ENCODE measurements at regions of chr6 and their contacts with region 1.

Region 1: DNA sequence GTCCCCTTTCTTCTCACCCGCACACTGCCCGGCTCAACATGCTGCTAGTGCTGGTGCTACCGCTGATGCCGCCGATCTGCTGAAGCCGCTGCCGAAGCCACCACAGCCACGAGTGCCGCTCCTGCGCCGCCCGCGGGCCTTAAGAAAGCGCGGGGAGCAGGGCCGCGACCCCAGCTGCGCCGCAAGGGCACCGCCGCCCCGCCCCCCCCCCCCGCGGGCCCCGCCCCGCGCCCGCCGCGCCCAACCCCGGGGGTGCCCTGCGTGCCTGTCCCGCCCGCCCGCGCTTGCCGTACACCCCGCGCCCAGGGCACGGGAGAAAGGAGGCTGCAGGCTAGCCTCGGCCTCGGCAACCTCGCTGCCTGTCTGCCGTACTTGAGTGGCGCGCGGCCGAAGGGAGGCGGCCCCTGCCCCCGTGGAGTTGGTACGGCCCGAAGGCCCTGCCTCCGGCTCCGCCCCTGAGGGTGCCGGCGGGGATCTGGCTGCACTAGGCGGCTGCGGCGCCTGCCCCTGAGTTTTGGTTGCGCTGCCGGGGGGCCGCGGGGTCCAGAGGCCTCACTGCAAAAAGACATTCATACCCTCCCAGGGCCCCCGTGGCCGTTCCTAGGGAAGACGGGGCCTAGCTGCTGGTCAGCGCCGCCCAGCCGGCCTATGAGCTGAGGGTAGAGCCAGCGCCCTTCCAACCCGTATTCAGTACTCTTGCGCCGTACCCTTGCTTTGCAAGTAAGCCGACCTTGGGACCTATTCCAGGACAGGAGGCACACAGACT is at the start of gene SOD2:
- DNase-seq: peak; percentile 75
- H3K4me3 Mint-ChIP-seq: peak within 1 kb of the TSS; percentile 94
- H3K27ac Mint-ChIP-seq: peak within 1 kb of the TSS; percentile 99
- H3K4me1 Mint-ChIP-seq: peaks cover 51% of the 10 kb centered on the region
- H3K27me3 Mint-ChIP-seq: no peaks in the 10 kb centered on the region
- total RNA-seq, gene SOD2: 78.3 and 81.0 TPM in 2 replicates

Region 2: GRCh38 chr6:158660333-158660754 is 1033.0 kb before region 1 on chr6:
- intact Hi-C with region 1: no loop called
- DNase-seq: no peak
- H3K4me3 Mint-ChIP-seq: no peak overlapping the region
- H3K27ac Mint-ChIP-seq: no peak overlapping the region
- H3K4me1 Mint-ChIP-seq: peaks cover 46% of the 10 kb centered on the region
- H3K27me3 Mint-ChIP-seq: no peaks in the 10 kb centered on the region

Region 3: GRCh38 chr6:159017757-159018559 is 675.4 kb before region 1 on chr6:
- intact Hi-C with region 1: loop called (anchors 5 kb)
- DNase-seq: no peak
- H3K4me3 Mint-ChIP-seq: peak overlapping the region; percentile 38
- H3K27ac Mint-ChIP-seq: peak overlapping the region; percentile 92
- H3K4me1 Mint-ChIP-seq: peaks cover 29% of the 10 kb centered on the region
- H3K27me3 Mint-ChIP-seq: no peaks in the 10 kb centered on the region

Region 4: GRCh38 chr6:159761873-159762680 is 68.8 kb after region 1 on chr6 and contains the start of gene ACAT2:
- intact Hi-C with region 1: loop called (anchors 1 kb)
- DNase-seq: peak; percentile 94
- H3K4me3 Mint-ChIP-seq: peak within 1 kb of the TSS; percentile 97
- H3K27ac Mint-ChIP-seq: peak within 1 kb of the TSS; percentile 93
- H3K4me1 Mint-ChIP-seq: peaks cover 45% of the 10 kb centered on the region
- H3K27me3 Mint-ChIP-seq: no peaks in the 10 kb centered on the region
- total RNA-seq, gene ACAT2: 83.1 and 84.2 TPM in 2 replicates

Region 5: DNA sequence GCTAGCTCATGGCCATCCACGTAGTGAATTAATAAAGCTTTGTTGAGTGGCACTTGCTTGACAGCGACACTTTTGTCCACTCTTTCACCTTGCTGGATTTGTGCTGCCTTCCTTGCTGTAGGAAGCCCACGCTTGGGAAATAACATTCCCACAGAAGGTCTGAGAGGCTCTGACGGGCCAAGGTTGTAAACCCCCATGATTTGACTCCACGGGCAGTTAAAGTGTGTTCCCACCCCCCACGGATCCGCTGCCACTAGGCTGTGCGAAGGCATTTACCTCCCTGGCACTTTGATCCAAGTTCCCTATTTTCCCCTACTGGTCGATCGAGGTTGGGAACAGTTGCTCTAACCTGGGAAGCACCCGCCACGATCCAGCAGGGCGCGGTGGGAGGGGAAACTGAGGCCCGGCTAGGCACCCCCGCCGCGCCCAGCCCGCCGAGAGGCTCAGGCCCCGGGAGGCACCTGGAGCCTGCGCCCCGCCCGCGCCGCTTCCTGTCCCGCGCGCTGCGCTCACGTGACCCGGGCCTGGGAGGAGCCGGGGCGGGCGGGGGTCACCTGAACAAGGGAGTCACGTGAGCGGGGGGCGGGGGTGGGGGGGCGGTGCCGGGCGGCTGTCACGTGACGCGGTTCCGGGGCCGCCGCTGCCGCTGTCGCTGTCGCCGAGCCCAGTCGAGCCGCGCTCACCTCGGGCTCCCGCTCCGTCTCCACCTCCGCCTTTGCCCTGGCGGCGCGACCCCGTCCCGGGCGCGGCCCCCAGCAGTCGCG is 275.3 kb after region 1 on chr6 and contains the start of gene IGF2R:
- intact Hi-C with region 1: loop called (anchors 2 kb)
- DNase-seq: peak; percentile 90
- H3K4me3 Mint-ChIP-seq: peak within 1 kb of the TSS; percentile 96
- H3K27ac Mint-ChIP-seq: peak within 1 kb of the TSS; percentile 93
- H3K4me1 Mint-ChIP-seq: peaks cover 34% of the 10 kb centered on the region
- H3K27me3 Mint-ChIP-seq: peaks cover 17% of the 10 kb centered on the region
- total RNA-seq, gene IGF2R: 118 and 126 TPM in 2 replicates

Region 6: GRCh38 chr6:160462551-160463109 is 769.3 kb after region 1 on chr6:
- intact Hi-C with region 1: loop called (anchors 5 kb)
- DNase-seq: peak; percentile 76
- H3K4me3 Mint-ChIP-seq: peak overlapping the region; percentile 34
- H3K27ac Mint-ChIP-seq: peak overlapping the region; percentile 71
- H3K4me1 Mint-ChIP-seq: peaks cover 79% of the 10 kb centered on the region
- H3K27me3 Mint-ChIP-seq: peaks cover 14% of the 10 kb centered on the region

Region 7: GRCh38 chr6:160714731-160715316 is 1021.5 kb after region 1 on chr6:
- intact Hi-C with region 1: no loop called
- DNase-seq: no peak
- H3K4me3 Mint-ChIP-seq: no peak overlapping the region
- H3K27ac Mint-ChIP-seq: no peak overlapping the region
- H3K4me1 Mint-ChIP-seq: no peaks in the 10 kb centered on the region
- H3K27me3 Mint-ChIP-seq: peaks cover 3% of the 10 kb centered on the region

Measured in activated T-helper 1 cell treated with anti-CD3 and anti-CD28 coated beads, Interleukin-12 subunit alpha, Interleukin-12 subunit beta, Interleukin-2, Interleukin-4 antibody, amounts not matched to agents 30 ng/mL and 10 ng/mL and 1 ng/mL, durations not matched to agents 14 hours and 24 hours and 36 hours (primary cell).